HepG2 (cell line): ENCODE measurements at regions of chr1 and their contacts with region 1.

Region 1: DNA sequence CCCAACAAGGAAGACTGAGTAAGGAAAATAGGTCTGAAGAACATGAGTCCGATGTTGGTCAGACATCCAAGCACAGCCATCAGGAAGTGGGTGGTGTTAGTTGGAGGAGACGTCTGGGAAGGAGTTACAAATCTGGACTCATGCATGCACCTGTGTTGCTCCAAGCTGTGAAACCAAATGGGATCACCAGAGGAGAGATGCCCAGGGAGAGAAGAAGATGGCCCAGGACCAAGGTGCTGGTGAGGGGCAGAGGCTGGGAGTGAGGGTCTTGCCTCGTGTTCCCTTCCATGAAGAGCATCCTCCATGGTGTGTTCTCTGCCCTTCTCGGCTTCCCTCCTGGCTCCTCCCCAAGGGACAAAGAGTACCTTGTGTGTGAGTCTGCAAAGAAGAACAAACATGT is 405.6 kb downstream of the NPHP4 start:
- DNase-seq: no peak
- ATAC-seq: no peak
- H3K4me3 ChIP-seq: no peak overlapping the region
- H3K27ac ChIP-seq: no peak overlapping the region
- H3K4me1 ChIP-seq: no peaks in the 10 kb centered on the region
- H3K27me3 ChIP-seq: no peaks in the 10 kb centered on the region
- CTCF ChIP-seq: no peak
- EP300 ChIP-seq: no peak
- POLR2A ChIP-seq: no peak
- RAD21 ChIP-seq: no peak

Region 2: DNA sequence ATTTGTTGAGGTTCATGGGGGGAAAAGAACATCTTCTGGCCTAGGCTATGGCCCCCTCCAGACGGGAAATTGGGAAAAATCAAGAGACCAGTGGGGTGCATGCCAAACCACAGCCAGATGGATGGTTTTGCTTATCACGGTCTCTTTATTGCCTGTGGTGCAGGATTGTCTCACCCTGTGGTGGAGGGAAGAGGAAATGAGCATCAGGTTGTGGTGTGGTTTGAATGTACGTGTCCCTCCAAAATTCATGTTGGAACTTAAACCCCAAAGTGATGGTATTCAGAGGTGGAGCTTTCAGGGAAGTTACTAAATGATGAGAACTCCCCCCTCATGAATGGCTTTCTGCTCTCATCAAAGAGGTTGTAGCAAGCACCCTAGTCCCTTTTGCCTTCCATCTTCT is 120.1 kb before region 1 on chr1:
- CTCF ChIA-PET with region 1: no interaction called
- POLR2A ChIA-PET with region 1: no interaction called
- in situ Hi-C with region 1: no loop called
- intact Hi-C with region 1: no loop called
- DNase-seq: no peak
- ATAC-seq: no peak
- H3K4me3 ChIP-seq: no peak overlapping the region
- H3K27ac ChIP-seq: no peak overlapping the region
- H3K4me1 ChIP-seq: no peaks in the 10 kb centered on the region
- H3K27me3 ChIP-seq: peaks cover 0 to 8% of the 10 kb centered on the region in 2 experiments; a peak in 2 of 5 replicates
- CTCF ChIP-seq: no peak
- EP300 ChIP-seq: no peak
- POLR2A ChIP-seq: no peak
- RAD21 ChIP-seq: no peak

Region 3: DNA sequence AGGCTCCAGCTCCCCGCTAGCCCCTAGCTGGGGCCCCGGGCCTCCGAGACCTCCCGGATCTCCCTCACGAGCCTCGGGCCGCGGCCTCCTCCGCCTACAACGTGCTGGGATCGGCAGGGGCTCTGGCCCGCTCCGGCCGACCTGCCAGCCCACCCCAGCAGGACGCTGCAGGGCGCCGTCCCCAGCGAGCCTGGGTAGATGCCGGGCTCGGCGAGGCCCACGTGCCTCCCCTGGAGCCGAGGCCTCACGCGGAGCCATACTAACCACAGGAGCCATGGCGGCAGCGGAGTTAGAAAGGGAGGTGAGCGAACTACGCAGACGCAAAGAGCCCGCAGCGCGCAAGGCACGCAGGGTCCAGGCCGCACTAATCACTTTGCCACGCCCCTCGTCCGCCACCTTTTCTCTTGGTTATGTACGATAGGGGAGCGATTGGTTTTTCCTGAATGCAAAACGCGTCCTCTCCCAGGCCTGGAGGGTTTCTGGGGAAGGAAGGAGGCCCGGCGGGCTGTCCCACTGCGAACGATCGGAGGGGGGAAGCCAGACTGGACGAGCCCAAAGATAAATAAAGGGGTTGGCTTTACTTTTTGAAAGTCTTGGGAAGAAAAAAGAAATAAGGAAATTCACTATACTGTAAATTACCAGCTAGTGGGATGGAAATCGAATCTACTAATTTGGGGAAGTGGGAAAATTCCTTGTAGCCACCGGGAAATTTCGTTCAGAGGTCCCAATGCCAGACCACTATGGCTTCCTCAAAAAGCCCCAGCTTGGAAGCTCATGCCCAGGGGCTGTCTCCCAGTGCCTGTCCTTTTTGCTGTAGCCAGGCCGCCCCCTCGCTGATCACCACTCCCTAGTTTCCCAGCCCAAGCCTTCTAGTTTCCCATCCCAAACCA is 612.9 kb after region 1 on chr1 and contains the start of gene RPL22:
- CTCF ChIA-PET with region 1: no interaction called
- POLR2A ChIA-PET with region 1: no interaction called
- in situ Hi-C with region 1: no loop called
- intact Hi-C with region 1: loop called (anchors 10 kb)
- DNase-seq: peak; percentile 98
- ATAC-seq: peak; percentile 98
- H3K4me3 ChIP-seq: peak within 1 kb of the TSS; percentile 93 to 97 (median 94)
- H3K27ac ChIP-seq: peak within 1 kb of the TSS; percentile 82
- H3K4me1 ChIP-seq: peaks cover 44% of the 10 kb centered on the region
- H3K27me3 ChIP-seq: no peaks in the 10 kb centered on the region
- CTCF ChIP-seq: 0 out of 2 replicates have a peak, but pooled peaks have one; percentile 11
- EP300 ChIP-seq: peak in 1 of 2 experiments; percentile 9; a peak in 1 of 4 replicates
- POLR2A ChIP-seq: peak; percentile 93
- RAD21 ChIP-seq: no peak
- total RNA-seq, gene RPL22: 545 and 787 TPM in 2 replicates